ENCODE measurements at regions of chr22 and their contacts with region 1.

Region 1: GRCh38 chr22:24303007-24303406 is 32.4 kb downstream of the SPECC1L start:
- DNase-seq: no peak
- ATAC-seq: no peak

Region 2: DNA sequence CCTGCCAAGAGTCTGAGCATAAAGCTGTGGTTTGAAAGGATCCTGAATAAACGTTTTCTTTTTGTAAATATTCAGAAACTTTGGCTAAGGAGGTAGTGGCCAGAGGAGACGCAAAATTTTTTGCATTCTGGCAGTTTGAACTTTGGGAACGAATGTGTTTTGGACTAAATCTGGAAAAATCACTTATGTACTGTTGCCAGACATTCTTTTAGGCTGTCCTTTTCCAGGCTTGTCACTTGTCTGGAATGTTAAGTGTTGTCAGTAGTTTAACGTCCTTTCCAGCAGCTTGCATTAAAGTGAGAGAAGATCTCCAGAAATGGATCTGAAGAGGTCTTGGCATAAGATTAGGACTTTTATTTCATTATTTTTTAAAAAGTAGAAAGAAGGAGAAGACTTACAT is 13.9 kb before region 1 on chr22:
- intact Hi-C with region 1: loop called (anchors 2 kb)
- DNase-seq: no peak
- ATAC-seq: peak; percentile 72

Region 3: DNA sequence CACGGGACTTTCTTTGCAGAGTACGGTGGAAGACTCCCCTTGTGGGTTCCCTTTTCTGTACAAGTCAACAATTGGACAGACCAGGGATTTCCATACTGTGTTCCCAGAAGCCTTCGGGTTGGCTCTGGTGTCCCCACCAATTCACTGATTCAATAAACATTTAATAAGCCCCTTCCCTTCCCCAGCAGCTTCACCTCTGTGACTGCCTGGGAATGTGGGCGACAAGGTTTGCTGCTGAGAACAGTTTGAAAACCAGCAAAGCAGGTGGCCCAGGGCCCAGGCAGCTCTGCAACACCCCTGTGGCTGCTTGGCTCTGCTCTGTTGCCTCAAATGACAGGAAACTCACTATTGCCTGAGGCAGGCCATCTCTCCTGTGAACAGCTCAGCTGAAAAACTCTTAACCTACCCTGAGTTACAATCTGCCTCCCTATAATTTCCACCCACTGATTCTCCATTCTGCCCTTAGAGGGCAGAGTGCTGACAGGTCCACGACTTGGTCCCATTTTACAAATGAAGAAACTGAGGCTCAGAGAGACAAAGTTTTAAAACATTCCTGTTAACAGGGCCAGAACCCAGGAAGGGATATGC is 134.8 kb after region 1 on chr22:
- intact Hi-C with region 1: no loop called
- DNase-seq: no peak
- ATAC-seq: no peak